Common myeloid progenitor, CD34-positive (primary cell): ENCODE measurements at regions of chr10 and their contacts with region 1.

Region 1: GRCh38 chr10:5094265-5095205 is at the start of gene AKR1C3:
- DNase-seq: peak; percentile 78 to 89 (median 88)
- H3K4me3 ChIP-seq: peak within 1 kb of the TSS in 6 of 7 experiments; percentile 55 to 99 (median 92)
- H3K27ac ChIP-seq: peak within 1 kb of the TSS; percentile 76 to 89
- H3K4me1 ChIP-seq: peaks cover 0 to 16% (median 4%) of the 10 kb centered on the region in 4 experiments
- H3K27me3 ChIP-seq: no peaks in the 10 kb centered on the region

Region 2: DNA sequence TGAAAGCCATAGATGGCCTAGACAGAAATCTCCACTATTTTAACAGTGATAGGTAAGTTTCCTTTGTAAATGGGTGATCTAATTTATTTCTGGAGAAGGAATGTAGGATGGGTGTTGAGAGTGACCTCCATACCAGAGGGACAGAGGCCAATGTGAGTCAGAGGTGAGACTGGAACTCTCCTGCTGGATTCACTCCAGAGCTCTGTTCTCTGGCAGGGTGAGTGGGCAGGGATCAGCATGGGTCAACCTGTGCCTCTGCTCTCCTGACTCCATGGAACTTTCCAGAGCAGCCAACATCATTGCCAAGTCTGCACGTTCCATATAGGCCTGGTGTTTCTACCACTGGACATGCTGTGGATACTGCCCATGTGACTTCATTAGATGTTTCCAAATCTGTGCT is 11.1 kb after region 1 on chr10:
- CTCF ChIA-PET with region 1: interaction called, 20 read pairs
- POLR2A ChIA-PET with region 1: no interaction called
- DNase-seq: no peak
- H3K4me3 ChIP-seq: no peak overlapping the region
- H3K27ac ChIP-seq: no peak overlapping the region
- H3K4me1 ChIP-seq: peaks cover 3 to 13% (median 10%) of the 10 kb centered on the region in 4 experiments
- H3K27me3 ChIP-seq: no peaks in the 10 kb centered on the region

Region 3: DNA sequence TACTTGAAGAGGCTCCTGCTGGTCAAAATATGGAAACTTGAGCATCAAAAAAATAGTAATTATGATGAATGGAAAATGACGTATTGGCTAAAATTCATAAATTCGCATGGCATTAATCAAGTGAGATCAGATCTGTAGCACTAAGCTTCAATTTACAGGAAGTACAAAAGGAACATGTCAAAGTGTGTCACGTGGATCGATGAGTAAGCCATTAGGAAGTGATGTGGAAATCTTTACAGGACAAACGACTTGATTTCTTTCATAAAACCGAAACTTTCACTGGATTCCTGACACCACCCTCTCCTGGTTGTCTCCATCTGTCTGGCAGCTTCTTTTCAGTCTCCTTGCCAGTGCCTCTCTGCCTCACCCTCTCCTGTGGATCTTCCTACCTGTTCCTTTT is 64.6 kb after region 1 on chr10:
- CTCF ChIA-PET with region 1: no interaction called
- POLR2A ChIA-PET with region 1: no interaction called
- DNase-seq: no peak
- H3K4me3 ChIP-seq: no peak overlapping the region
- H3K27ac ChIP-seq: no peak overlapping the region
- H3K4me1 ChIP-seq: no peaks in the 10 kb centered on the region
- H3K27me3 ChIP-seq: no peaks in the 10 kb centered on the region

Region 4: GRCh38 chr10:5283305-5284158 is 189.0 kb after region 1 on chr10:
- CTCF ChIA-PET with region 1: interaction called, 16 read pairs
- POLR2A ChIA-PET with region 1: no interaction called
- DNase-seq: peak; percentile 82 to 90 (median 89)
- H3K4me3 ChIP-seq: peak overlapping the region in 2 of 7 experiments; percentile 23 to 42
- H3K27ac ChIP-seq: no peak overlapping the region
- H3K4me1 ChIP-seq: peaks cover 17 to 33% (median 30%) of the 10 kb centered on the region in 4 experiments
- H3K27me3 ChIP-seq: no peaks in the 10 kb centered on the region